PC-3 (cell line): ENCODE measurements at regions of chr11 and their contacts with region 1.

Region 1: DNA sequence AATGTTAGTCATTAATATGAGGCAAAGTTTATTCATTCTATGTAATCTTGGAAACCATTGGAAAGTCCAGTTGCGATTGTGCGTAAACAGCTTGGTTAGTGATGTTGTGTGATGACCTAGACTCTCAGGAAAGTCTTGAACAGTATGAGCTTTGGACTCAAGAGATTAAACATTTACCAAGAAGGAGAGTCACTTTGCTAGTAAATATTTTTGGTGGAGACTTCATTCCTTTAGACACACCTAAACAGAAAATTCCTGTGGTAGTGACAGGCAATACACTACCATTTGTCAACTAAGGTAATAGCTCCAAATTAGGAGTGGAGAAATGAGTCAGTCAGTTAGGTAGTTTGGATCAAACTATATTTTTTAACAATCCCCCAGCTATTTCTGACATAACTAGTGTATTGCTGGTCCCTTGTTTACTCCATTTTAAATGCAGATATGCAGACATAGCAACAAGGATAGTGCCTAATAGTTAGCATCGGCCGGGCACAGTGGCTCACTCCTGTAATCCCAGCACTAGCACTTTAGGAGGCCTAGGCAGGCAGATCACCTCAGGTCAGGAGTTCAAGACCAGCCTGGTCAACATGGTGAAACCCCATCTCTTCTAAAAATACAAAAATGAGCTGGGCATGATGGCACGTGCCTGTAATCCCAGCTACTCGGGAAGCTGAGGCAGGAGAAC is 89.3 kb downstream of the ARHGAP42 start:
- DNase-seq: peak; percentile 98
- ATAC-seq: peak; percentile 71
- H3K4me3 ChIP-seq: peak overlapping the region; percentile 51
- H3K27ac ChIP-seq: peak overlapping the region; percentile 93
- H3K4me1 ChIP-seq: peaks cover 36% of the 10 kb centered on the region
- H3K27me3 ChIP-seq: no peaks in the 10 kb centered on the region
- CTCF ChIP-seq: no peak

Region 2: GRCh38 chr11:99406345-99406744 is 1370.0 kb before region 1 on chr11:
- CTCF ChIA-PET with region 1: no interaction called
- POLR2A ChIA-PET with region 1: no interaction called
- intact Hi-C with region 1: no loop called
- DNase-seq: no peak
- ATAC-seq: no peak
- H3K4me3 ChIP-seq: no peak overlapping the region
- H3K27ac ChIP-seq: no peak overlapping the region
- H3K4me1 ChIP-seq: no peaks in the 10 kb centered on the region
- H3K27me3 ChIP-seq: no peaks in the 10 kb centered on the region
- CTCF ChIP-seq: no peak

Region 3: GRCh38 chr11:100562128-100562527 is 214.2 kb before region 1 on chr11:
- CTCF ChIA-PET with region 1: no interaction called
- POLR2A ChIA-PET with region 1: interaction called, 20 read pairs
- intact Hi-C with region 1: no loop called
- DNase-seq: peak; percentile 97
- ATAC-seq: peak; percentile 83
- H3K4me3 ChIP-seq: no peak overlapping the region; the same call in 1 of the 2 replicates
- H3K27ac ChIP-seq: peak overlapping the region; percentile 31
- H3K4me1 ChIP-seq: peaks cover 40% of the 10 kb centered on the region
- H3K27me3 ChIP-seq: no peaks in the 10 kb centered on the region
- CTCF ChIP-seq: no peak

Region 4: GRCh38 chr11:100681064-100681502 is 95.3 kb before region 1 on chr11:
- CTCF ChIA-PET with region 1: interaction called, 11 read pairs
- POLR2A ChIA-PET with region 1: interaction called, 7 read pairs
- intact Hi-C with region 1: loop called (anchors 1 kb)
- DNase-seq: peak; percentile 91
- ATAC-seq: peak; percentile 78
- H3K4me3 ChIP-seq: no peak overlapping the region
- H3K27ac ChIP-seq: peak overlapping the region; percentile 89
- H3K4me1 ChIP-seq: peaks cover 51% of the 10 kb centered on the region
- H3K27me3 ChIP-seq: no peaks in the 10 kb centered on the region
- CTCF ChIP-seq: no peak

Region 5: DNA sequence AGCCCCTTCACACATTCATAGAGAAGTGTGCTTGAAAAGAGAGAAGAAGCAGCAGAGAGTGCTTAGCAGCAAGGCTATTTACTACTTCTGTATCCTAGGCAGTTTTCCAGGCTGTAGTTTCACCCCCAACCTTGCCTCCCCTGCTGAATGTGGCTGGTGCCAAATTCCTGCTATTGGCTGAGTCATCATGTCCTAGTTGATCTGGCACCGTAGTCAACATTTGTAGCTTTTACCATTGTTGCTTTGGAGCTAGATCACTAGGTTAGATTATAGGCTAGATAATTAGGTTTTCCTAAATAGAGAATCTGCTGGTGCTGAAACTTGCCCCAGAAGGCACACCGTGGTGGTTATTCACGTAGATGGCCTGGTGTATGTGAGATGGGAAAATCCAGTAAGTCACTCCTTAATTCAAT is 56.5 kb before region 1 on chr11:
- CTCF ChIA-PET with region 1: no interaction called
- POLR2A ChIA-PET with region 1: interaction called, 6 read pairs
- intact Hi-C with region 1: loop called (anchors 1 kb)
- DNase-seq: peak; percentile 94
- ATAC-seq: peak; percentile 92
- H3K4me3 ChIP-seq: peak overlapping the region; percentile 10; the same call in 1 of the 2 replicates
- H3K27ac ChIP-seq: peak overlapping the region; percentile 78
- H3K4me1 ChIP-seq: peaks cover 28% of the 10 kb centered on the region
- H3K27me3 ChIP-seq: no peaks in the 10 kb centered on the region
- CTCF ChIP-seq: no peak

Region 6: GRCh38 chr11:100827934-100828661 is 51.7 kb after region 1 on chr11:
- CTCF ChIA-PET with region 1: interaction called, 12 read pairs
- POLR2A ChIA-PET with region 1: interaction called, 17 read pairs
- intact Hi-C with region 1: loop called (anchors 1 kb)
- DNase-seq: peak; percentile 97
- ATAC-seq: peak; percentile 86
- H3K4me3 ChIP-seq: no peak overlapping the region
- H3K27ac ChIP-seq: peak overlapping the region; percentile 93
- H3K4me1 ChIP-seq: peaks cover 46% of the 10 kb centered on the region
- H3K27me3 ChIP-seq: no peaks in the 10 kb centered on the region
- CTCF ChIP-seq: peak; percentile 85

Region 7: DNA sequence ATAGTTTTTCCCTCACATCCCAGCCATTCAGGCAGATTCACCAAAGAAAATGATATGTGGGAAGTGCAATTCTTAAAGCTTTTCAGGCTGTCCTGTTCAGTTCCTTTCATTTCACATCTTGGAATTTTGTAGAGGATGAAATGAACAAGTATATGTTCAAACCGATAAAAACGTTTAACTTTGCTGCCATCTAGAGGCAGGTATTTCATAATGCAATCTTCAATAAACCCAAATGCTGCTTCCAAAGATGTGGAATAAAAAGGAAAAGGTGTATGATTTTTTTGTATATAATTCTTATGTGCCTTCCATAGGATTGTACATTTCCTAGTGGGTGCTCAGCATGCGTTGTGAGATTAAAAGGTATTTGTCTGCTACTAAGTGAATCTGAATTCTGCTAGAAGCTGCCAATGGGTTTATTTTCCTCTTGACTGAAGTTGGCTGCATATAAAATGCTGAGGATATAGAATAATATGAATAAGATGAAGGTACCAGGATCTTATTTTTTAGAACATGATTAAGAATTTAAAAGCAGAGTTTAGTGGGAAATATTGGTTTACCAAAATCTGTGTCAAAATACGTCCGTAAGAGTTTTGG is 153.9 kb after region 1 on chr11:
- CTCF ChIA-PET with region 1: interaction called, 4 read pairs
- POLR2A ChIA-PET with region 1: interaction called, 7 read pairs
- intact Hi-C with region 1: loop called (anchors 1 kb)
- DNase-seq: peak; percentile 89
- ATAC-seq: peak; percentile 35
- H3K4me3 ChIP-seq: peak overlapping the region; percentile 0; the same call in 1 of the 2 replicates
- H3K27ac ChIP-seq: peak overlapping the region; percentile 55; the same call in 1 of the 2 replicates
- H3K4me1 ChIP-seq: peaks cover 31% of the 10 kb centered on the region
- H3K27me3 ChIP-seq: no peaks in the 10 kb centered on the region
- CTCF ChIP-seq: peak; percentile 92